GM12878 (cell line): ENCODE measurements at regions of chr6 and their contacts with region 1.

Region 1: GRCh38 chr6:5214570-5215052 is 46.1 kb downstream of the LYRM4 start:
- DNase-seq: no peak
- ATAC-seq: peak; percentile 87
- H3K4me3 ChIP-seq: no peak overlapping the region
- H3K27ac ChIP-seq: no peak overlapping the region
- H3K4me1 ChIP-seq: no peaks in the 10 kb centered on the region
- H3K27me3 ChIP-seq: no peaks in the 10 kb centered on the region
- CTCF ChIP-seq: peak; percentile 58 to 73 (median 70)
- EP300 ChIP-seq: no peak
- POLR2A ChIP-seq: no peak
- RAD21 ChIP-seq: peak; percentile 89

Region 2: DNA sequence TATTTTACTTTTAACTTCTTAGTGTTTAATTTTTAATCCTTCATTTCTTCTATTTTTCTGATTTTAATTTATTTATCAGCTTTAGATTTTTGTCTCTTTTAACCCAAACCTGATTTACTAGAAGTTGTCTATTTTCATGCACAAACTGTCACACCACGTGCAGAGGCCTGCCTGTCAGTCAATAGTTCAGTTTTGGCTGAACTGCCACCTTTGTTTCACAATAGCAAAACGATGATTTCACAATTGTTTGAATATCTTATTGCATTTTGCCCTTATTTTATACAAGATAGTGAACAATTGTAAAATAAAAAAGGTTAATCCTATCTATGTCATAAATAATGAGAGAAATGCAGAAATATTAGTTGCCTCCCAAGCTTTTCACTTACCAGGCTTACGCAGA is 153.5 kb before region 1 on chr6:
- CTCF ChIA-PET with region 1: no interaction called
- POLR2A ChIA-PET with region 1: no interaction called
- RAD21 ChIA-PET with region 1: no interaction called
- SMC1A ChIA-PET with region 1: no interaction called
- in situ Hi-C with region 1: no loop called
- intact Hi-C with region 1: no loop called
- DNase-seq: no peak
- ATAC-seq: no peak
- H3K4me3 ChIP-seq: no peak overlapping the region
- H3K27ac ChIP-seq: no peak overlapping the region
- H3K4me1 ChIP-seq: no peaks in the 10 kb centered on the region
- H3K27me3 ChIP-seq: no peaks in the 10 kb centered on the region; a peak in 1 of 4 replicates
- CTCF ChIP-seq: no peak
- EP300 ChIP-seq: no peak
- POLR2A ChIP-seq: no peak
- RAD21 ChIP-seq: no peak

Region 3: DNA sequence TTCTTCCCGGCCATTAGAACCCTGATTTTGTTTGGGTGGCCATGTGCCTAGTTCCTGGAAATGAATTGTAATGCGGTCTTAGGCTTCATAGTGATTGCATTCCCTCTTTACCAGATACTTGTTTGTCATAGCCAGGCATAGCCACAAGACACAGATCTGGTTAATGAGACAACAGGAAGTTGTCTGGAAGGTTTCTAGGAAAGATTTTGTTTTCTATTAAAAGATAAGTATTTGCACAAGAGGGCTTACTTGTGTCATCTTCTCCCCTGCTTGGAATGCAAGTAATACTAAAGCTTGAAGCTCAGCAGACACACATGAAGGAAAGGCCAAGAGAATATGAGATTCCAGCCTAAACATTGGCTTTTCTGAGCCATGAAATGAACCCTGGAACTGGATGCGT is 59.6 kb after region 1 on chr6:
- CTCF ChIA-PET with region 1: no interaction called
- POLR2A ChIA-PET with region 1: no interaction called
- RAD21 ChIA-PET with region 1: no interaction called
- SMC1A ChIA-PET with region 1: no interaction called
- in situ Hi-C with region 1: no loop called
- intact Hi-C with region 1: no loop called
- DNase-seq: no peak
- ATAC-seq: no peak
- H3K4me3 ChIP-seq: no peak overlapping the region
- H3K27ac ChIP-seq: no peak overlapping the region
- H3K4me1 ChIP-seq: peaks cover 7% of the 10 kb centered on the region
- H3K27me3 ChIP-seq: no peaks in the 10 kb centered on the region
- CTCF ChIP-seq: no peak
- EP300 ChIP-seq: no peak
- POLR2A ChIP-seq: no peak
- RAD21 ChIP-seq: no peak

Region 4: DNA sequence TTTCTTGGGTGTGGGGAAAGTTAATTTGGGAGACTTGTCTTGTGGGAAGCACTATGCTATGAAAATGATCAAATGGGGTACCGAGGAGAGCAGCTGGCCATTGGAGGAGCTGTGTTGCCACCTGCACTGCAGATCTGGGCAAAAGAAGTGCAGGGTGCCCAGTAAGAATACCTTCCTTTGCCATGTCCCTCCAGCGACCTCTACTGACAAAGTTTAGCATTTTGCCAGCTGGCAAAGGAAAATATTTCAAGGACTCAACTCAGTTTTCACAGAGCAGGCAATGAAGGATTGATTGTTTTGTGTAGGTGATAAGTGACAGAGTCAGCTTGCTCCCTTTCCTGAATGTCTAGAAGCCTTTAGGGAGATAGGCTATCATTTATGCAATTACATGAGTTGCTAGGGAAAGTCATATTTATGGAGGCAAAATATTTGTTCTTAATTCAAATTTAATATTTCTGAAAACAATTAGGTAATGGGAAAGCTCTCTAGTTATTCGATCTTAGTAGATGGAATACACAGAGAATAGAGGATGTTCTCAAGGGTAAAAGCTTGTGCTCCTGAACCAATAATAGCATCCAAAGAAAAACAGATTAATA is 165.1 kb after region 1 on chr6:
- CTCF ChIA-PET with region 1: interaction called, 9 read pairs
- POLR2A ChIA-PET with region 1: no interaction called
- RAD21 ChIA-PET with region 1: interaction called, 10 read pairs
- SMC1A ChIA-PET with region 1: interaction called, 8 read pairs
- in situ Hi-C with region 1: no loop called
- intact Hi-C with region 1: loop called (anchors 1 kb)
- DNase-seq: peak; percentile 25
- ATAC-seq: peak; percentile 88
- H3K4me3 ChIP-seq: no peak overlapping the region
- H3K27ac ChIP-seq: no peak overlapping the region
- H3K4me1 ChIP-seq: no peaks in the 10 kb centered on the region
- H3K27me3 ChIP-seq: no peaks in the 10 kb centered on the region
- CTCF ChIP-seq: peak; percentile 76 to 87 (median 78)
- EP300 ChIP-seq: no peak
- POLR2A ChIP-seq: no peak
- RAD21 ChIP-seq: peak; percentile 82

Region 5: GRCh38 chr6:5398530-5398929 is 183.9 kb after region 1 on chr6:
- CTCF ChIA-PET with region 1: interaction called, 19 read pairs
- POLR2A ChIA-PET with region 1: no interaction called
- RAD21 ChIA-PET with region 1: interaction called, 5 read pairs
- SMC1A ChIA-PET with region 1: interaction called, 4 read pairs
- in situ Hi-C with region 1: no loop called
- intact Hi-C with region 1: loop called (anchors 5 kb)
- DNase-seq: no peak
- ATAC-seq: peak; percentile 92
- H3K4me3 ChIP-seq: no peak overlapping the region
- H3K27ac ChIP-seq: no peak overlapping the region
- H3K4me1 ChIP-seq: no peaks in the 10 kb centered on the region
- H3K27me3 ChIP-seq: no peaks in the 10 kb centered on the region
- CTCF ChIP-seq: peak; percentile 43 to 59 (median 49)
- EP300 ChIP-seq: no peak
- POLR2A ChIP-seq: no peak
- RAD21 ChIP-seq: peak; percentile 55